ENCODE measurements at regions of chr6 and their contacts with region 1.

Region 1: DNA sequence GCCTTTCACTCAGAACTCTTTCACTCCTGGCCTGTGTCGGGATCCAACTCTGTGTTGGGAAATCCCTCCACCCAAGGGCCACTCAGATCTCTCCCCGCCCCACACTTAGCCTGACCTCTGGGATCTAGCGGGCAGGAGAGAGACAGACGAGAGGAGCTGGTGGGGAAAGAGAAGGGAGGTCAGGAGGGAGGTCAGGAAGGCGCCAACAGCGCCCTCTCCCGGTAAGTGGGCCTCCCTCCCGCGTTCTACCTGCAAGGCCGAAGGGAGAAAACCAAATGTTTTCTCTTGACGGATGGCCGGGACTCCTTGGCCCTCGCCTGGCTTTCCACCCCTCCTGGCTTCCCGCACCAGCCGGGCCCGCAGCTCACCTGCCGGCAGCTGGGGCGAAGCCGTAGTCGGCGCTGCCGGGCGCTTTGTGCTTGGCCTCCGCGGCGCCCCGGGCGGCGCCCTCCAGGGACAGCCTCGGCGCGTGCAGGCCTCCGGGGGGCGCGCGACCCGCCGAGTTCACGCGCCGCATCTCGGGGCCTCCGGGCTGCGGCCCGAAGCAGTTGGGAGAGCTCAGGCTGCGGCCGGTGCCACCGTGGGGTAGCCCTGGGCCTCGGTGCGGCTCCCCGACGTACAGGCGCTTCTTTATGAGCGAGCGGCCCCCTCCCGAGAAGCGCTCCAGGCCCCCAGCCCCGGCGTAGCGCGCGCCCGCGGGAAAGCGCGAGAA is 38.2 kb downstream of the C6orf132 start:
- DNase-seq: peak; percentile 60
- H3K4me3 Mint-ChIP-seq: peak overlapping the region; percentile 70
- H3K27ac Mint-ChIP-seq: peak overlapping the region; percentile 67
- H3K4me1 Mint-ChIP-seq: peaks cover 39% of the 10 kb centered on the region
- H3K27me3 Mint-ChIP-seq: peaks cover 1% of the 10 kb centered on the region

Region 2: DNA sequence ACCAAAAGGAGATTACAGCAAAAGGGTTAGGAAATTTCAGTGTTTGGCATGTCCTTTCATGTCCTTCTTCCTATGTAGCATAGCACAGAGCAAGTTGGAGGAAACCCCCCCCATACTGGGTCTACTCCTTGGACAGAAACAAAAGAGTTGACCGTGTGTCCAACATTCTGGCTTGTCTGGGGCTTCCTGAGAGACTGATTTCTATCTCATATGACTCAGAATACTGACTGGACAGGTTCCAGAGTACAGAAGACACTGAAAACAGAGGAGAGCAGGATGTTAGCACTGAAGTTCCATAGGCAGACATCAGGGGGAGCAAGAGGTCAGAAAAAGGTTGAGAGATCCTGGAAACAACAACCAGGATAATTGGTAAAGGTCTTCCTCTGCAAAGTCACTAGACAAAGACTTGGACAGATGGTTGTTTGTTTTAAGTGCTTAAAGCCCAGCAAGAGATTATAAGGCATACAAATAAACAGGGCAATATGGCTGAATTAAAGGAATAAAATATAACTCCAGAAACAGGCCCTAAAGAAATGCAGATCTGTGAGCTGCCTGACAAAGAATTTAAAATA is 257.5 kb before region 1 on chr6:
- intact Hi-C with region 1: loop called (anchors 2 kb)
- DNase-seq: peak; percentile 31
- H3K4me3 Mint-ChIP-seq: no peak overlapping the region
- H3K27ac Mint-ChIP-seq: no peak overlapping the region
- H3K4me1 Mint-ChIP-seq: peaks cover 11% of the 10 kb centered on the region
- H3K27me3 Mint-ChIP-seq: no peaks in the 10 kb centered on the region

Region 3: GRCh38 chr6:42050266-42051032 is 53.8 kb before region 1 on chr6 and contains the start of gene TAF8:
- intact Hi-C with region 1: loop called (anchors 2 kb)
- DNase-seq: peak; percentile 87
- H3K4me3 Mint-ChIP-seq: peak within 1 kb of the TSS; percentile 93
- H3K27ac Mint-ChIP-seq: peak within 1 kb of the TSS; percentile 92
- H3K4me1 Mint-ChIP-seq: peaks cover 58% of the 10 kb centered on the region
- H3K27me3 Mint-ChIP-seq: no peaks in the 10 kb centered on the region
- total RNA-seq, gene TAF8: 36.7 and 38.3 TPM in 2 replicates

Region 4: DNA sequence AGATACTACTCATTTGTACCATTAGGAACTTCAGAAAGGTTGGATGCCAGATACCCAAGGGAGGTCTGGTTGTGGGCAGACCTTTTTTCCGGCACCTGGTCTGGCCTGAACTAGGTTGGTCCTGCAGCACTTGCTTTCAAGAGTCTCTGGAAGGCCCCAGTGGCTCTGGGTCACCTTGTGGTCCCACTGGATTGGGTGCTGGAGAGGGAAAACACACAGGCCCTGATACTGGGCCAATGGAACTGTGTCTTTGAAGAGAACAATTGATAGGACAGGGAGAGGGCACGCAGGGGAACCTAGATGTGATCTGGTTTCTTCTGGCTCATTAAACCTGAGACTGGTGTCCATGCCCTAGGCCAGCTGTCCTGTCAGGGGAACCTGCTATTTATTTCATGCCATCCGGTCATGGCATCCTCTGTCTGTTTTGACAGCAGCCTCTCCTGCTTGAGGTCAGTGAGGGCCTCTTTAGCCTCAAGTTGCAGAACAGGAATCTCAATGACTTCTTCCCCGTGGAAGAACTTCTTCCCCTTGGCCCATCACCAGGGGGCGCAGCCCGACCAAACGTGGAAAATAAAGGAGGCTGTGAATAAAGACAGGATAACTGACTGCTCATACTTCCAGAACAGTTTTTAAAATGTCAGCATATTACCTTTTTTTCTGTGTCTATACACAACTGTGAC is 29.0 kb before region 1 on chr6:
- intact Hi-C with region 1: loop called (anchors 1 kb)
- DNase-seq: peak; percentile 33
- H3K4me3 Mint-ChIP-seq: no peak overlapping the region
- H3K27ac Mint-ChIP-seq: no peak overlapping the region
- H3K4me1 Mint-ChIP-seq: peaks cover 8% of the 10 kb centered on the region
- H3K27me3 Mint-ChIP-seq: no peaks in the 10 kb centered on the region

Region 5: DNA sequence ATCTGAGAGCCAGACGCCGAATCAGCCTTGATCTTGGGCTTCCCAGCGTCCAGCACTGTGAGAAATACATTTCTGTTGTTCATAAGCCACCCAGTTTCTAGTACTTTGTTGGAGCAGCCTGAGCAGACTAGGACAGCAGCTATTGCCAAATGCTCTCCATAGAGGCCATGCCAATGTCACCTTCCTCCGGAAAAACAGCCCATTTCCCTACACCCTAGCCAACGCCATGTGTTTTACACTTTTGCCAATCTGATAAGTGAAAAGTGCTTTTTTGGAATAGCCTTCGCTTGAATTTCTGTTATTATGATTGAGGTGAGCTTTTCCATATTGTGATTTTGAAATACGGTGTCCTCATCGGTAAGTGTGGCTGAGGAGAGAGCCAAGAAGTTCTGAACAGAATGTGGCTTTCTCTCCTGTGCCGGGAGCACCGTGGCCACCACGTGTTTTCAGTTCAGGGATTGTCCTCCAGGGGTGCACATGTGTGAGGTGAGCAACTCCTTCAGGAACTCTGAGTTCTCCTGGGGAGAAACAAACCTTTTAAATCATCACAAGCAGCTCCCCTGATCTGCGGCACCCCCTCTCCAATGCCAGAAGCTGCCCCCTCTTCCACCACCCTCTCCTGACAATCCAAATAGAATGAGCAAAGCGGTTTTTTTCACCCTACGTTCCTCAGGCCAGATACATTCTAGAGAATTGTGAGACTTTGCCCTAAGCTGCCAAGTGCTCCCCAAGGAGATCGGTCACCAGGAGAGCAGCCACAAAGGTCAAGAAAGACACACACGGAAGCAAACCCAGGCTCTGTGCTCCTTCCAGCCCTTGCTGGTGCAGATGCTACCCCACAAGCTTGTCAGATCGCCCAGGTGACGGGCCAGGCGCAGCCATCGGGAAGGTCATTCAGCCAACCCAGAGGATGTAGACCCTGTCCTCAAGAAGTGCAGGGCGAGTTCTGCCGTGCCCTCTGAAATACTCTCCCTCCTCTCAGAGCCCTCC is 17.9 kb before region 1 on chr6:
- intact Hi-C with region 1: no loop called
- DNase-seq: no peak
- H3K4me3 Mint-ChIP-seq: no peak overlapping the region
- H3K27ac Mint-ChIP-seq: no peak overlapping the region
- H3K4me1 Mint-ChIP-seq: no peaks in the 10 kb centered on the region
- H3K27me3 Mint-ChIP-seq: no peaks in the 10 kb centered on the region

Region 6: GRCh38 chr6:42166444-42167141 is 62.3 kb after region 1 on chr6:
- intact Hi-C with region 1: loop called (anchors 1 kb)
- DNase-seq: peak; percentile 68
- H3K4me3 Mint-ChIP-seq: no peak overlapping the region
- H3K27ac Mint-ChIP-seq: no peak overlapping the region
- H3K4me1 Mint-ChIP-seq: peaks cover 7% of the 10 kb centered on the region
- H3K27me3 Mint-ChIP-seq: peaks cover 7% of the 10 kb centered on the region